OCI-LY7 (cell line): ENCODE measurements at regions of chr5 and their contacts with region 1.

Region 1: DNA sequence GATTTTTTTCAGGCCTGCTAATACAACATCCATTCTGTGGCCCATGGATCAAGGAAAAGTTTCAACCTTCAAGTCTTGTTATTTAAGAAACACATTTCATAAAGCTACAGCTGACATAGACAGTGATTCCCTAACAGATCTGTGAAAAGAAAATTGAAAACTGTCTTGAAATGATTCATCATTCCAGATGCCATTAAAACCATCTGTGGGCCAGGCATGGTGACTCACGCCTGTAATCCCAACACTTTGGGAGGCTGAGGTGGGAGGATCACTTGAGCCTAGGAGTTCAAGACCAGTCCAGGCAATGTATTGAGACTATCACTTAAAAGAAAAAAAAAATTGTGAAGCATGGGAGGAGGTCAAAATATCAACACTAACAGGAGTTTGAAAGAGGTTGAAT is 6.0 kb downstream of the RAPGEF6 start:
- DNase-seq: no peak
- H3K4me3 ChIP-seq: peak overlapping the region; percentile 87
- H3K27ac ChIP-seq: no peak overlapping the region
- H3K4me1 ChIP-seq: peaks cover 52% of the 10 kb centered on the region
- CTCF ChIP-seq: no peak

Region 2: DNA sequence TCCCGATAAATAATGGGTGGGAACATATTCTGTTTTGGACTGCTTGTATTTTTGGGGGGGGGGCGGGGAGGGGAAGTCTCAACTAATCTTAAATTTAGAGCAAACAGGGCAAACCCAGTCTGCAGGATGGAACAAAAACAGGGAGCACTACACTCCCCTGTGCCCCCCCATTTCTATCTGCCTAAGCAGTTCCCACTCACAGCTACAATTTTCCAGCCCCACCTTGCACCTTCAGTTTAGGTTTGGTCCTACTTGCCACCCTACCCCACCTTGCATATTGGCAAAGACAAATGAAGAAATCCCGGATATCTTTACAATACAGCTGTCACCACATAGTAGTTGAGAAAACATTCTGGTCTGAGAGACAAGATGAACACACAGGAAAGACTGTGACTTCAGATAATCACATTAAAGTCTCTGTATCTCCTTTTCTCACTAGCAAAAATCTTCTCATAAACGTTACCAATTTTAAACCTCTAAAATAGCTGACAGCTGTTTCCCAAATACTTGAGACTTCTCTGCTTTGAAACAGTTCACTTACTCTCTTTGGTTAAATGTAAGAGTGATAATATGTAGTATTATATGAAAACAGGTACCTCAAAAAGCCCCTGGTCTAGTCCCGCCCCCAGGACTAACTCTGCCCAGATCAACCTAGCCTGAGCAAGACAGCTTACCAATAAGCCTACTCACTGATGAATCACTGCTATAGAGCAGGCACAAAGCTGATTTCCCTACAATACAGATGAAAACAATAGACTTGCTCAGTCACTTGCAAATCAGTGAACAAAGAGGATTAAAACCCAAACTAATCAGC is 11.3 kb after region 1 on chr5:
- CTCF ChIA-PET with region 1: no interaction called
- POLR2A ChIA-PET with region 1: interaction called, 11 read pairs
- intact Hi-C with region 1: no loop called
- DNase-seq: peak; percentile 11
- H3K4me3 ChIP-seq: no peak overlapping the region
- H3K27ac ChIP-seq: peak overlapping the region; percentile 13
- H3K4me1 ChIP-seq: peaks cover 35% of the 10 kb centered on the region
- CTCF ChIP-seq: no peak

Region 3: DNA sequence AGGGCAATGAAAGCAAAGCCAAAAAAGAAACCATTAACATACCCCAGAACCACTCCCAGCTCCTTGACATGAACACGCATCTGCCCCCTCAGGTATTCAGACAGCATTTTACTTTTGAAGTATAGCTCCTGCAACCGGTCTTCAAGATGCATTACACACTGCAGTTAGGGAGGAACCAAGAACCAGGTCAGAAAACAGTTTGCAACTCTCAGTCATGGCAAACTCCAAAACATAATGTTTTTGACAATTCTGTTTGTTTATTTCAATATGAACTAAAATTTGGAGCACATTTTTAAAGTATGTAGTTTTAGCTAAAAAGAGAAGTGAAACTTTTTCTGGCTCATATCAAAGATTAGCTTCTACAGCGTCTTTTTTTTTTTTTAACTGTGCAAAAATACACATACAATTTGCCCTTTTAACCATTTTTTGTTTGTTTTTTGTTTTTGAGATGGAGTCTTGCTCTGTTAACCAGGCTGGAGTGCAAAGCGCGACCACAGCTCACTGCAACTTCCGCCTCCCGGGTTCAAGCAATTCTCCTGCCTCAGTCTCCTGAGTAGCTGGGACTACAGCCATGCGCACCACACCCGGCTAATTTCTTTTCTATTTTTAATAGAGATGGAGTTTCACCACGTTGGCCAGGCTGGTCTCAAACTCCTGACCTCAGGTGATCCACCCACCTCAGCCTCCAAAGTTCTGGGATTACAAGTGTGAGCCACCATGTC is 18.2 kb after region 1 on chr5:
- CTCF ChIA-PET with region 1: no interaction called
- POLR2A ChIA-PET with region 1: interaction called, 20 read pairs
- intact Hi-C with region 1: no loop called
- DNase-seq: peak; percentile 73
- H3K4me3 ChIP-seq: peak overlapping the region; percentile 44
- H3K27ac ChIP-seq: peak overlapping the region; percentile 76
- H3K4me1 ChIP-seq: peaks cover 29% of the 10 kb centered on the region
- CTCF ChIP-seq: peak; percentile 68

Region 4: GRCh38 chr5:132883261-132883834 is 1254.4 kb after region 1 on chr5:
- CTCF ChIA-PET with region 1: no interaction called
- POLR2A ChIA-PET with region 1: no interaction called
- intact Hi-C with region 1: no loop called
- DNase-seq: peak; percentile 60
- H3K4me3 ChIP-seq: no peak overlapping the region
- H3K27ac ChIP-seq: no peak overlapping the region
- H3K4me1 ChIP-seq: peaks cover 5% of the 10 kb centered on the region
- CTCF ChIP-seq: peak; percentile 85